ENCODE measurements at regions of chr5 and their contacts with region 1.

Region 1: DNA sequence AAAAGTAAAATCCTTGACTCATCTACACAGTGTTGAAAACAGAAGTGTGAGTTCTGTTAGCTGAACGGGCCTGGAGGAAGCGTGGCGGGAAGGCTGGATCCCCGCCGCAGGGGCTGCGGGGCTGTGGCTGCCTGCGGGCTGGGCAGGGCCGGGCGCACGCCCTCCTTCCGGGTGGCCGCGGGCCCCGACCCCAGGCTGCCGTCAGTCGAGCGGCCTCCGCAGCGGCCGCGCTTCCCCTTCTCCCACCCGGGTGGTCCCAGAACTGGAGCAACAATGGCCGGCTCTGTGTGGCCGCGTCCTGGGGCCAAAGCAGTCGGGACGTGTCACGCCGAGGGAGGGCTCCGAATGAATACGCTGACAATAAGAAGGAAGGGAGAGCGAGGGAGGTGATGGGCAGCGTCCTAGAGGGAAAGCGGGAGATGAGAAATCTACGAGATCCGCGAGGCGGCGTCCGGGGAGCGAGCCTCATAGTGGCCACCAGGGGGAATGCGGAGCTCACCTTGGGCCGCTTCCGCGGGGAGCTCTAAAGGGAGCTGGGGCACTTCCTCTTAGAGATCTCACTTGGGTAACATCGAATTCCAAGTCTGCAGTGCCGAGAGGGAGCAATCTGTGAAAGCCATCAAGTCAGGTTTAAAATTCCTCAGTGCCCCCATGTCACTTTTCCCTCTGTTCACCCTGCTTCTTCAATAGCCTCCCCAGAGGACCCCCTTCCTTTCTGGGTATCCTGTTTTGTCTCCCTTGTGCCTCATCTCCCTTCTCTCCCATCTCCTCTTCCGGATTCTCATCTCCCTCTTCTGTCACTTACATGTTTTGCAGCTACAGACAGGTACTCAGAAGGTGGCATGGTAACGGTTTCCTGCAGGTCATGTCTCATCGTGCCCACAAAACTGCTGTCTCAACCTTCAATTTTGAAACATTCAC is 83.9 kb downstream of the SLC1A3 start:
- DNase-seq: peak; percentile 81
- H3K4me3 ChIP-seq: peak overlapping the region; percentile 41 to 70 (median 55)
- H3K27ac ChIP-seq: peak overlapping the region; percentile 54
- H3K4me1 ChIP-seq: peaks cover 22% of the 10 kb centered on the region
- H3K27me3 ChIP-seq: no peaks in the 10 kb centered on the region
- CTCF ChIP-seq: peak; percentile 89 to 94

Region 2: GRCh38 chr5:36177715-36178523 is 512.4 kb before region 1 on chr5:
- CTCF ChIA-PET with region 1: no interaction called
- dilution Hi-C with region 1: no loop called
- in situ Hi-C with region 1: loop called in 1 of 2 experiments (anchors 10 kb)
- intact Hi-C with region 1: loop called (anchors 1 kb)
- DNase-seq: peak; percentile 18
- H3K4me3 ChIP-seq: no peak overlapping the region
- H3K27ac ChIP-seq: no peak overlapping the region
- H3K4me1 ChIP-seq: no peaks in the 10 kb centered on the region
- H3K27me3 ChIP-seq: no peaks in the 10 kb centered on the region
- CTCF ChIP-seq: peak; percentile 62 to 65

Region 3: DNA sequence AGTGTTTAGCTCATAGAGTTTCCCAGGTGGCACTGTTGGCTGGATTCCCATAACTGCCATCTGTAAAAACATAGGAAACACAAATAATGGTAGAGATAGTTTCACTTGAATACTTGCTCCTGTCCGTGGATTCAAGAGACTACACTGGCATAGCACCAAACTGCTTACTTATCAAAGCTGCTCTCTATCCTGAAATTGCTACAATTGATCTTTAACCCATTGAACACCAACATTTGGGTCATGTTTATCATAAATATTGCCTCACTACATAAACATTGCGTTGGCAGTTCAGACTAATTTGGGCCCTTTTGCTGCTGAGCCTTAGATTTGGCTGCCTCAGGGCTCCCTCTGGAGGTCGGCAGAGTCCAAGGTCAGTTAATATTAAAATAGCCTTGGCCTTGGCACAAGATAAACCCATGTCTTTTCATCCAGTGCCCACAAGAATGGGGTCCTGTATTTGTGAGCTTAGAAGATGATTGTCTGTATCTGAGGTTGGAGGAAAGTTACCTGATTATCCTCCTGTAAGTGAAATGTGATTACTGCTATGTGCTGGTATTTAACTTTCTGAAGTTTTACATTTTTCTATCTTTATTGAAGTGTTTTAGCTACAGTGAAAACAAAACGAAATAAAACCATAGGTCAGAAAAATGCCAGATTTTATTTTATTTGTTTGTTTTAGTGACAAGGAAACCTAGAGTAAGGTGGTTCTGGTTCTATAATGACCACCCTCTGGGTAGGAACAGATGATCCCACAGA is 384.6 kb before region 1 on chr5:
- CTCF ChIA-PET with region 1: interaction called, 20 read pairs
- dilution Hi-C with region 1: no loop called
- in situ Hi-C with region 1: no loop called
- intact Hi-C with region 1: no loop called
- DNase-seq: peak; percentile 18
- H3K4me3 ChIP-seq: no peak overlapping the region
- H3K27ac ChIP-seq: no peak overlapping the region
- H3K4me1 ChIP-seq: peaks cover 4% of the 10 kb centered on the region
- H3K27me3 ChIP-seq: peaks cover 6% of the 10 kb centered on the region
- CTCF ChIP-seq: peak; percentile 50 to 75

Region 4: GRCh38 chr5:36507332-36507952 is 182.9 kb before region 1 on chr5:
- CTCF ChIA-PET with region 1: interaction called, 4 read pairs
- dilution Hi-C with region 1: no loop called
- in situ Hi-C with region 1: loop called (anchors 5 kb)
- intact Hi-C with region 1: loop called (anchors 1 kb)
- DNase-seq: peak; percentile 42
- H3K4me3 ChIP-seq: no peak overlapping the region
- H3K27ac ChIP-seq: no peak overlapping the region
- H3K4me1 ChIP-seq: peaks cover 12% of the 10 kb centered on the region
- H3K27me3 ChIP-seq: no peaks in the 10 kb centered on the region
- CTCF ChIP-seq: peak; percentile 79 to 86

Region 5: GRCh38 chr5:36606428-36607113 is 83.7 kb before region 1 on chr5 and contains the start of gene SLC1A3:
- CTCF ChIA-PET with region 1: interaction called, 3 read pairs
- dilution Hi-C with region 1: no loop called
- in situ Hi-C with region 1: no loop called
- intact Hi-C with region 1: loop called (anchors 1 kb)
- DNase-seq: peak; percentile 83
- H3K4me3 ChIP-seq: peak within 1 kb of the TSS; percentile 69 to 83 (median 69)
- H3K27ac ChIP-seq: peak within 1 kb of the TSS; percentile 85
- H3K4me1 ChIP-seq: peaks cover 20% of the 10 kb centered on the region
- H3K27me3 ChIP-seq: no peaks in the 10 kb centered on the region
- CTCF ChIP-seq: no peak
- total RNA-seq, gene SLC1A3: 21.7 to 24.2 TPM

Region 6: GRCh38 chr5:36769129-36769770 is 78.9 kb after region 1 on chr5:
- CTCF ChIA-PET with region 1: interaction called, 22 read pairs
- dilution Hi-C with region 1: no loop called
- in situ Hi-C with region 1: no loop called
- intact Hi-C with region 1: no loop called
- DNase-seq: no peak
- H3K4me3 ChIP-seq: no peak overlapping the region
- H3K27ac ChIP-seq: no peak overlapping the region
- H3K4me1 ChIP-seq: no peaks in the 10 kb centered on the region
- H3K27me3 ChIP-seq: peaks cover 4% of the 10 kb centered on the region
- CTCF ChIP-seq: no peak

Measured in mammary epithelial cell (primary cell).